Right ventricle myocardium inferior (tissue), 1 donor: ENCODE measurements at regions of chr22 and their contacts with region 1.

Region 1: DNA sequence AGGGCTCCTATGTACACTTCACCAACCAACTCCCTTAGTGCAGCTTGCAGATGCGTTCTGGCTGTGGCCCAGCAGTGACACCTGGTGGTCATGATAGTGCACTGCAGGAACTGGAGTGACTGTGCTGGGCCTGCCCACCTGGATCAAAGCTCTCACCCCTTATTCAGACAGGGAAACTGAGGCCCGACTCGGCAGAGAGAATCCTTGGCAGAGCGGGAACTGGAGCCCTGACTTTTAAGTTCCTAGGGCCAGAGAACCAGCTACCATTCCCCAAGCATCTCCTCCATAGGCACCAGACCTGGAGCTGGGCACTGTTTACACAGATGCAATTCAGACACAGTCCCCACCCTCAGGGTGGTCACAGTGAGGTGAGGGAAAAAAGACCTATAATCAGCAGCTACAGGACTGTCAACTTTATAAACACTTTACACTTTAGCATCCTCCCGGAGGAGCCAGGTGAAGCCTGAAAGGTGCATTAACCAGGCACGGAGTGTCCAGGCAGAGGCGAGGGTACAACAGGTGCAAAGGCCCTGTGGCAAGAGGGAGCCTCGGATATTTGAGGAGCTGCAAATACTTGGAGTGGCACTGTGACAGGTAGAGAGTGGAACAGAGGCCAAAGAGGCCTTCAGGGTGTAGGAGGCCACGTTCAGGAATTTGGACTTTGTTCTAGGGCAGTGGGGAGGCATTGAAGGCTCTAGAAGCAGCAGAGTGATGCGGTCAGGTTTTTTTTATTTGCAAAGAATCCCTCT is 22.0 kb downstream of the RHBDD3 start:
- DNase-seq: peak; percentile 89
- ATAC-seq: peak; percentile 88

Region 2: DNA sequence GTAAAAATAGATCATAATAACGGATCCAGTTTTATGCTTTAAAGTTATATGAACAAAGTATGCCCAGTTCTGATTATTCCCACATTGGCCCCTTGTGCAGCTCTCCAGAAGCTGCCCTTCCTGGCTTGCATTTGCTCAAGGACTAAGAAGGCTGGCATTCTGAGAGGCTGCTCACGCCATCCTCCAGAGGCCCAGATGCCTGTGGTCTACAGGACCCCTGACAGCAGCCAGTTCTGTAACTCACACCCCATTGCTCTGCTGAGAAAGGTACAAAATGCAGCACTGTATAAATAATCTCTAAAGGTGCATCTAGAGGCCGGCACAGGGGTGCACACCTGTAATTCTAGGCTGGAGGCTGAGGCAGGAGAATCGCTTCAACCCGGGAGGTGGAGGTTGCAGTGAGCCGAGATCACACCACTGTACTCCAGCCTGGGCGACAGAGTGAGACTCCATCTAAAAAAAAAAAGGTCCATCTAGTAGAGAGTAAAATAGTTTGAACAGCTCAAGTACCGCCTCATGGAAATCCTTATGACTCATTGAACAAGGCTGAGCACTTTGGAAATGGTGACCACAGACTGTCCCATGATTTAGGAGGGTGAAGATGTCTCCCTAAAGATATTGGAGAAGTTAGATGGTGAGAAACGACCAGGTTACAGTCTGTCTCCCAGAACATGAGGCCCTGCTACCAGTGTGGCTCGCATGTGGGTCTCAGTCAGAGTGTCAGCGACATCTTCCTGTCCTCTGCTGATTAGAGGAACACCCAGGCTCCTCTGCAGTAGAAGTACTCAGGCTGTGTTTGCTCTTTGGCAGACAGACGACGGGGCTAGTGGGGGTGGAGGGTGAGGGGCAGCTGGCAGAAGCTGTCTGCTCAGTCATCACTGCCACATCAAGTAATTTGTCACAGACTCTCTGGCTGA is 116.7 kb before region 1 on chr22:
- intact Hi-C with region 1: no loop called
- DNase-seq: no peak
- ATAC-seq: peak; percentile 88

Region 3: DNA sequence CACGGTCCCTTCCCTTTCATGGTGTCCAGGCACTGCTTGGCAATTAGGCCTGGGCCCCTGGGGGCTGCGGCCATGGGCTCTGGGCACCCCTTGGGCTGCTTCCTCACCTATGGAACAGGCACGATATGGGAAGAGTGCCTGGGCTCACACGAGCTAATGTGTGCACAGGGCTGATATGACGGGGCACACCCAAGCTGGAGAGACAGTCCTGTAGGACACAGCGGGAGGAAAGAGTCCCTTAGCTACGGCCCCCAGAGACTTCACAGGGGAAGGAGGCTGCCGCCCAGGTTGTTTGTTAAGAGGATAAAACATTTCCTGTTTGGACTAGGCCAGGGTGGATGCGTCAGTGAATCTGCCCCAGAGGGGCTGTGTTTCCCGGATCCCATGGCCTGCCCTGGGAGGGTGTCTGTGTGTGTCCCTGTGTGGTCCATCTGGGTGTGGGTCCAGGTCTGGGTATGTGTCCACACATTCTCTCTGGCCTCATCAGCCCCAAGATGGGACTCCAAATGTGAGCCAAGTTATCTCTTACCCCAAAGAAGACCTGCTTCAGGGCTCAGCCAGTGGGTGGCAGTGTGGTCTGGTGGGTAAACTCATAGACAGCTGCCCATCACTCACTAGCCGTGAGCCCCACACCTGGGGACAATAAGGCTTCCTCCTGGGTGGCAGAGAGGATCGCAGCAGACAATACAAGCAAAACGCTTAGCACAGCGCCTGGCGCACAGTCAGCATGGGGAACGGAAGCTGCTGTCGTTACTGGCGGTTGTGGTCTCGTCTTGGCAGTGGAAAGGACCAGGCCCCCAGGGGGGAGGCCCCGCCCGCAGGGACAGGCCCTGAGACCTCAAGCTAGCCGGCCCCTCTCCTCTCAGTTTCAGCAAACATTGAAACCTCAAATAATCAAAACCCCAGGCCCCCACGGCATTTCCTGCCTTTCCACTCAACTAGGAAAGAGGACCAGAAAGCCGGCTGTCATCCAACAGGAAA is 43.3 kb before region 1 on chr22:
- intact Hi-C with region 1: loop called (anchors 5 kb)
- DNase-seq: peak; percentile 81
- ATAC-seq: peak; percentile 51

Region 4: DNA sequence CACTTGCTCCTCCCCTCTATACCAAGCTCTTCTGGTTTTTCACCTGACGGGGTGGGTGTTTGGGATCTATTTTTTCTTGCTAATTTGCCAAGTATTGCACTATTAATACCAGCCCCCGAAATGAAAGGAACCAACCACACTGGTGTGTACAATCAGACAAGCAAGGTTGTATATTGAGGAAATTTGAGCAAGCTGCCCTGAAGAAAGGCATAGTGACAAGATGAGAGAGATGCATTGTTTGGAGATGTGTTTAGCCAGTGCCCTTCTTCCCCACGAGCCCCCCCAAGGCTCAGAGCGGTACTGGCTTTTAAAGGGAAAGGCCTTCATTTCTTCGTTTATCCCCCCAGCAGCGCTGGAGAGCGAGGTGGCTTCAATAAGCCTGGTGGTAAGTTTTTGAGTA is 45.4 kb after region 1 on chr22:
- intact Hi-C with region 1: no loop called
- DNase-seq: no peak
- ATAC-seq: no peak

Region 5: DNA sequence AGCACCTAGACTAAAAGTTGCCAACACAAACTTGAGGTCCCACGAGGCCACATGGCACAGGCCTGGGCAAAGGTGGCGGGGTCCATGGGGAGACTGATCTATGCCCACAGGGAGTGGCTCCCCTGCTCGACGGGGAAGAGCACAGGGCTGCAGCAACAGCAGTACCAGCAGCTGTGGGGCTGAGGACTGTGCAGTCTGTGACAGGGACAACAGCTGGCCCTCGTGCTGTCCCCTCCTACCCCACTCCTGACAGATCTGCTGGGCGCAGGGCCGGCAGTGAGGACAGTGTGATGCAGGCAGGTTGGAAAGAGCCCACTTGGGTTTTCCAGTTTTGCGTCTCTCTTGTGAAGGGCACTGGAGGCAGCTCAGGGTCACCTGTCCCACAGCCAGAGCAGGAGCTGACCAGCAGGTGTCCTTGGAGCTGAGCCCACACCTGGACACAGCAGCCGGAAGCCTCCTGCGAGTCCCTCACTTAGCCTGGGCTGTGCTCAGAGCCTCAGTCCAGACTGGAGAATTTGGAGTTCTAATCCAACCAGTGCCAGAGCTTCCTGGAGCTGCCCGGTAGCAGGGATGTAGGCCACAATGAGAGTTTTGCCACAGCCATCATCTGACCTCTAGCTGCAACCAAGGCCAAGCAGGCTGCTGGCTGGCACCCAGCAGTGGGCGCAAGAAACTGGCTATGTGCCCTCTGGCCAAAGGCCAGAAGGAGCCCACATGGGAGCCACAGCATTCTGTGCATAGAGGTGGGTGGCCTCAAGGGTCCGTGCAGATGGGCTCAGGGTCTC is 57.1 kb after region 1 on chr22:
- intact Hi-C with region 1: no loop called
- DNase-seq: no peak
- ATAC-seq: no peak